Caco-2 (cell line): ENCODE measurements at regions of chr1 and their contacts with region 1.

Region 1: GRCh38 chr1:115906660-115907059 is 65.7 kb upstream of the NHLH2 start:
- DNase-seq: peak in 1 of 2 experiments; percentile 7
- H3K4me3 ChIP-seq: no peak overlapping the region
- H3K4me3 Mint-ChIP-seq: no peak overlapping the region
- H3K27ac Mint-ChIP-seq: no peak overlapping the region
- H3K4me1 ChIP-seq: no peaks in the 10 kb centered on the region
- H3K4me1 Mint-ChIP-seq: no peaks in the 10 kb centered on the region
- H3K27me3 ChIP-seq: no peaks in the 10 kb centered on the region
- H3K27me3 Mint-ChIP-seq: peaks cover 10% of the 10 kb centered on the region
- CTCF ChIP-seq: no peak

Region 2: DNA sequence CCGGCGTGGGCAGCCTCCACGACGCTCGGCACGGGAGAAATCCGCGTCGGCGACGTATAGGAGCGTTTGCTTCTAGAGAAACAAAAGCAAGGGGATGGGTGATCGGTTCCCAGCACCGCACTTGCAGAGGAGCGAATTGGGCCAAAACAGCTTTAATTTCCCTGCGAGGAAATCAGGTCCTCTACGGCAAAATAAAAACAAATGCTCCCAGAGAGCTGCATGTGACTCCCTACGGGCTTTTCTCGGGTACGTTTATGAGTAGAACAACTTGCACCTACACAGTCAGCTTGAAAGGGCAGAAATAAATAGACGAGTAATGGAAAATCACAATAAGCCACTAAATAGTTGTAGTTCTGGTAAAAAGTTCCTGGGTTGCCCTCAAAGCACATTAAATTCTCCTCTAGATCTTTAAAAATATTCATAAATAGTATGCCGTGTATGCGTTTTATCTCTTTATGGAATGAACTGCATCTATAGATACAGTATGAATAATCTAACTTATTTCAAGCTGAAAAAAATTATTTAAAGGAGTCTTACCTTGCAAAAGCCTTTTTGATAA is 66.9 kb before region 1 on chr1:
- CTCF ChIA-PET with region 1: no interaction called
- POLR2A ChIA-PET with region 1: no interaction called
- intact Hi-C with region 1: loop called (anchors 10 kb)
- DNase-seq: no peak
- H3K4me3 ChIP-seq: no peak overlapping the region
- H3K4me3 Mint-ChIP-seq: no peak overlapping the region
- H3K27ac Mint-ChIP-seq: no peak overlapping the region
- H3K4me1 ChIP-seq: no peaks in the 10 kb centered on the region
- H3K4me1 Mint-ChIP-seq: no peaks in the 10 kb centered on the region
- H3K27me3 ChIP-seq: no peaks in the 10 kb centered on the region
- H3K27me3 Mint-ChIP-seq: peaks cover 5% of the 10 kb centered on the region
- CTCF ChIP-seq: no peak